ENCODE measurements at regions of chr5 and their contacts with region 1.

Region 1: GRCh38 chr5:79133657-79134451 is 22.2 kb downstream of the BHMT start:
- DNase-seq: peak; percentile 83 to 90 (median 88)
- H3K4me3 ChIP-seq: peak overlapping the region in 6 of 7 experiments; percentile 21 to 67 (median 41)
- H3K27ac ChIP-seq: peak overlapping the region in 1 of 2 experiments; percentile 49
- H3K4me1 ChIP-seq: peaks cover 6 to 12% (median 12%) of the 10 kb centered on the region in 4 experiments
- H3K27me3 ChIP-seq: no peaks in the 10 kb centered on the region

Region 2: GRCh38 chr5:79107020-79107796 is 26.6 kb before region 1 on chr5:
- CTCF ChIA-PET with region 1: interaction called, 15 read pairs
- POLR2A ChIA-PET with region 1: no interaction called
- DNase-seq: peak; percentile 39 to 78 (median 64)
- H3K4me3 ChIP-seq: peak overlapping the region in 3 of 7 experiments; percentile 6 to 29 (median 9)
- H3K27ac ChIP-seq: no peak overlapping the region
- H3K4me1 ChIP-seq: peaks cover 5 to 32% (median 26%) of the 10 kb centered on the region in 4 experiments
- H3K27me3 ChIP-seq: peaks cover 6 to 23% (median 10%) of the 10 kb centered on the region in 5 experiments

Region 3: DNA sequence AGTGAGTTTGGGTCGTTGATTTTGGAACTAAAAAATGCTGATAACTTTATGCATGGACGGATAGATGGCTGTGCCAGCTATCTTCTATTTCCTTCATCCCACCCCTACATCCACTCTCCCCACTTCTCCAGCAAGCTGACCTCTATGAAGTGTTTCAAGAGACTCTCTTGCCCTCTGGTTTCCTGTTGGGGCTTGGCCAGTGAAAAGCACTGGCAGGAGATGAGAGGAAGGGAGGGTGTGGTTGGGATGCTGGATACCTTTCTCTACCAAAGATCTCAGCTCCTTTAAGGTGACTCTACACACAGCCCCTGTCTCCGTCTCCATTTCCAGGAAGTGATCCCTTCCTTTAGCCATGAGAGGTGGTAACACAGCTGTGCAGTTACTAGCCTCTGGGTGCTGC is 72.1 kb after region 1 on chr5:
- CTCF ChIA-PET with region 1: no interaction called
- POLR2A ChIA-PET with region 1: no interaction called
- DNase-seq: no peak
- H3K4me3 ChIP-seq: no peak overlapping the region
- H3K27ac ChIP-seq: no peak overlapping the region
- H3K4me1 ChIP-seq: no peaks in the 10 kb centered on the region
- H3K27me3 ChIP-seq: no peaks in the 10 kb centered on the region

Region 4: DNA sequence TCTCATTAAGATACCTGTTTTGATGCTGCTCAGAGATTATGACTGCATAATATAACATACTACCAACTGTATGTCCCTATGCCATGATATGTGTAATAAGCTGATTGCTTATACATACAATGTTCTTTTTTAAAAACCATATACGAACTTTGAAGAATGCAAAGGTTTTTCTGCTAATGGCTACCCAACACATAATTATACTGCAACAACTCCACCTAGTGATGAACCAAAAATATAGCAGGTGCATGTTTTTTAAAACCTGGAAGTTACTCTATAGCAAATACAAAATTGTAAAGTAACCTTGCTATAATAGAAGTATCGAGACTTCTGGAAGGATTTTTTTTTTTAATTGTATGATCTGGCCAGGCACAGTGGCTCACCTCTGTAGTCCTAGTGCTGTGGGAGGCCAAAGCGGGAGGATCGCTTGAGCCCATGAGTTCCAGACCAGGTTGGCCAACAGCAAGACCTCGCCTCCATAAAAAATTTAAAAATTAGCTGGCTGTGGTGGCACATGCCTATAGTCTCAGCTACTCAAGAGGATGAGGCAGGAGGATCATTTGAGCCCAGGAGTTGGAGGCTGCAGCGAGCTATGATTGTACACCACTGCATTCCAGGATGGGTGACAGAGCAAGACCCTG is 331.0 kb after region 1 on chr5:
- CTCF ChIA-PET with region 1: interaction called, 10 read pairs
- POLR2A ChIA-PET with region 1: no interaction called
- DNase-seq: peak; percentile 22 to 51 (median 41)
- H3K4me3 ChIP-seq: no peak overlapping the region
- H3K27ac ChIP-seq: no peak overlapping the region
- H3K4me1 ChIP-seq: no peaks in the 10 kb centered on the region
- H3K27me3 ChIP-seq: no peaks in the 10 kb centered on the region